ENCODE measurements at regions of chr6 and their contacts with region 1.

Region 1: GRCh38 chr6:36623547-36624459 is 29.6 kb downstream of the SRSF3 start:
- DNase-seq: peak; percentile 84
- H3K4me3 ChIP-seq: no peak overlapping the region
- H3K27ac ChIP-seq: no peak overlapping the region
- H3K4me1 ChIP-seq: peaks cover 7% of the 10 kb centered on the region
- H3K27me3 ChIP-seq: no peaks in the 10 kb centered on the region
- CTCF ChIP-seq: peak; percentile 84 to 87
- POLR2A ChIP-seq: no peak

Region 2: DNA sequence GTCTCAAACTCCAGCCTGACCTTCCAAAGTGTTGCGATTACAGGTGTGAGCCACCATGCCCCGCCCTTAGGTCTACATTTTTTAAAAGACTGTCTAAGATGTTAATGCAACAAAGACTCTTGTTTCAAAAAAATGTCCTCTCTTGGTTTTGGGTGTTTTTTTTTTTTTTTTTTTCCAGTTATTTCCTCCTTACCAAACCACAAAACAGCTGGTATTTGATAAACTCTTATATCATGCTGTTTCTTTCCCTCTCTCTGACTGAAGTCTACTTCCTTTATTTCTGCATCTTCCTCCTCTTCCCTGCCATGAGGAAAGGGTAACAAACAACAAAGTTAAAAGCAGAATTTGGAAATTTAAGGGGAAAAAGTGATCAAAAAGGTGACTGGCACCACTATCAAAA is 97.7 kb before region 1 on chr6:
- CTCF ChIA-PET with region 1: no interaction called
- POLR2A ChIA-PET with region 1: no interaction called
- dilution Hi-C with region 1: no loop called
- intact Hi-C with region 1: no loop called
- DNase-seq: no peak
- H3K4me3 ChIP-seq: no peak overlapping the region
- H3K27ac ChIP-seq: no peak overlapping the region
- H3K4me1 ChIP-seq: peaks cover 6% of the 10 kb centered on the region
- H3K27me3 ChIP-seq: no peaks in the 10 kb centered on the region
- CTCF ChIP-seq: no peak
- POLR2A ChIP-seq: no peak

Region 3: GRCh38 chr6:36633915-36634314 is 10.1 kb after region 1 on chr6:
- CTCF ChIA-PET with region 1: interaction called, 11 read pairs
- POLR2A ChIA-PET with region 1: no interaction called
- dilution Hi-C with region 1: no loop called
- intact Hi-C with region 1: no loop called
- DNase-seq: peak; percentile 87
- H3K4me3 ChIP-seq: no peak overlapping the region
- H3K27ac ChIP-seq: no peak overlapping the region
- H3K4me1 ChIP-seq: peaks cover 11% of the 10 kb centered on the region
- H3K27me3 ChIP-seq: no peaks in the 10 kb centered on the region
- CTCF ChIP-seq: no peak
- POLR2A ChIP-seq: no peak

Region 4: DNA sequence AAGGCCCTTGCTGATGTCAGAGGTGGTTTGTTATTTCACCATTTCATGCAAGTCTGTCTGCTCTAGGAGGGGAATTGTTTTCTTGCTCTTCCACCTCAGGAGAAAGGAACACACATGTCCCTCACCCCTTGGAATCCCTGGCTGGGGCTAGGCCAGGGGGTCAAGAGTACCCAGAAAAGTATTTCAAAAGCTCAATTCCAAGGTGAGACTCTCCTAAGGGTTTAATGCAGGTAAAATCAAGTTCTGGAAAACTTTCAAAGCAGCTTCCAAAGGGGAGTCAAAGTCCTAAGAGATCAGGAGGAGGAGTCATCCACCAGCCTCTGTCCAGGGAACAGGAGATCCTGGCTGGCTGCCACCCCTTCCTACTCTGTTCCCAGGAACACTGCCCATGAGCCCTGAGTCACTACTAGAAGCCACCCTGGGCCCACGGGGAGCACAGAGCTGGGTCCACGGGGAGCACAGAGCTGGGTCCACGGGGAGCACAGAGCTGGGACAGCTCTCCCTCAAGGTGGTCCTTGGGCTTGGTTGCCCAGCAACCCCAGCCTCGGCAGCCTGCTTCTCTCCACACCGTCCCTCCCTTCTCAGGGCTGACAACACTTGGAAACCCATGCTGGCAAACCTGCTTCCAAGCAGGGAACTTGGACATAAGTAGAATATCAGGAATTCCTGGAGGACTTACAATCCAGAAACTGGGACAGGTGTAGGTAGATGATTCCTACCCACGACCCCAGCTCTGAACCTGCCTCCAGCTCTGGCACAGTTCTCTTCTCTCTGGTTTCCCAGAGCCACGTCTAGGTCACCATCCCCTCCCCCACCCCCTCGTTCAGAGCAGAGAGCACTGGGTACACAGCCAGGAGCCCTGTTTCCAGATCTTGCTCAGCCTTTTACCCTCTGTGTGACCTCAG is 19.4 kb after region 1 on chr6:
- CTCF ChIA-PET with region 1: interaction called, 22 read pairs
- POLR2A ChIA-PET with region 1: no interaction called
- dilution Hi-C with region 1: no loop called
- intact Hi-C with region 1: no loop called
- DNase-seq: peak; percentile 53
- H3K4me3 ChIP-seq: no peak overlapping the region
- H3K27ac ChIP-seq: no peak overlapping the region
- H3K4me1 ChIP-seq: no peaks in the 10 kb centered on the region
- H3K27me3 ChIP-seq: no peaks in the 10 kb centered on the region
- CTCF ChIP-seq: no peak
- POLR2A ChIP-seq: no peak

Region 5: GRCh38 chr6:37845026-37845911 is 1221.5 kb after region 1 on chr6:
- CTCF ChIA-PET with region 1: no interaction called
- POLR2A ChIA-PET with region 1: no interaction called
- dilution Hi-C with region 1: no loop called
- intact Hi-C with region 1: no loop called
- DNase-seq: no peak
- H3K4me3 ChIP-seq: no peak overlapping the region
- H3K27ac ChIP-seq: no peak overlapping the region
- H3K4me1 ChIP-seq: no peaks in the 10 kb centered on the region
- H3K27me3 ChIP-seq: no peaks in the 10 kb centered on the region
- CTCF ChIP-seq: no peak
- POLR2A ChIP-seq: no peak